ENCODE measurements at regions of chr1 and their contacts with region 1.

Region 1: GRCh38 chr1:45303582-45304310 is 22.9 kb upstream of the HPDL start:
- DNase-seq: peak; percentile 97
- H3K4me3 Mint-ChIP-seq: peak overlapping the region; percentile 96
- H3K27ac Mint-ChIP-seq: peak overlapping the region; percentile 97
- H3K4me1 Mint-ChIP-seq: peaks cover 39% of the 10 kb centered on the region
- H3K27me3 Mint-ChIP-seq: no peaks in the 10 kb centered on the region

Region 2: GRCh38 chr1:44730741-44731512 is 572.8 kb before region 1 on chr1 and contains the start of gene RNU5D-1:
- intact Hi-C with region 1: loop called (anchors 1 kb)
- DNase-seq: peak; percentile 97
- H3K4me3 Mint-ChIP-seq: peak within 1 kb of the TSS; percentile 65
- H3K27ac Mint-ChIP-seq: peak within 1 kb of the TSS; percentile 98
- H3K4me1 Mint-ChIP-seq: peaks cover 32% of the 10 kb centered on the region
- H3K27me3 Mint-ChIP-seq: no peaks in the 10 kb centered on the region
- total RNA-seq, gene RNU5D-1: not detected in 2 replicates

Region 3: GRCh38 chr1:44985747-44986359 is 317.9 kb before region 1 on chr1:
- intact Hi-C with region 1: loop called (anchors 1 kb)
- DNase-seq: no peak
- H3K4me3 Mint-ChIP-seq: peak overlapping the region; percentile 96
- H3K27ac Mint-ChIP-seq: peak overlapping the region; percentile 89
- H3K4me1 Mint-ChIP-seq: peaks cover 17% of the 10 kb centered on the region
- H3K27me3 Mint-ChIP-seq: no peaks in the 10 kb centered on the region

Region 4: GRCh38 chr1:45079533-45079932 is 224.2 kb before region 1 on chr1:
- intact Hi-C with region 1: no loop called
- DNase-seq: no peak
- H3K4me3 Mint-ChIP-seq: no peak overlapping the region
- H3K27ac Mint-ChIP-seq: no peak overlapping the region
- H3K4me1 Mint-ChIP-seq: no peaks in the 10 kb centered on the region
- H3K27me3 Mint-ChIP-seq: peaks cover 19% of the 10 kb centered on the region

Region 5: DNA sequence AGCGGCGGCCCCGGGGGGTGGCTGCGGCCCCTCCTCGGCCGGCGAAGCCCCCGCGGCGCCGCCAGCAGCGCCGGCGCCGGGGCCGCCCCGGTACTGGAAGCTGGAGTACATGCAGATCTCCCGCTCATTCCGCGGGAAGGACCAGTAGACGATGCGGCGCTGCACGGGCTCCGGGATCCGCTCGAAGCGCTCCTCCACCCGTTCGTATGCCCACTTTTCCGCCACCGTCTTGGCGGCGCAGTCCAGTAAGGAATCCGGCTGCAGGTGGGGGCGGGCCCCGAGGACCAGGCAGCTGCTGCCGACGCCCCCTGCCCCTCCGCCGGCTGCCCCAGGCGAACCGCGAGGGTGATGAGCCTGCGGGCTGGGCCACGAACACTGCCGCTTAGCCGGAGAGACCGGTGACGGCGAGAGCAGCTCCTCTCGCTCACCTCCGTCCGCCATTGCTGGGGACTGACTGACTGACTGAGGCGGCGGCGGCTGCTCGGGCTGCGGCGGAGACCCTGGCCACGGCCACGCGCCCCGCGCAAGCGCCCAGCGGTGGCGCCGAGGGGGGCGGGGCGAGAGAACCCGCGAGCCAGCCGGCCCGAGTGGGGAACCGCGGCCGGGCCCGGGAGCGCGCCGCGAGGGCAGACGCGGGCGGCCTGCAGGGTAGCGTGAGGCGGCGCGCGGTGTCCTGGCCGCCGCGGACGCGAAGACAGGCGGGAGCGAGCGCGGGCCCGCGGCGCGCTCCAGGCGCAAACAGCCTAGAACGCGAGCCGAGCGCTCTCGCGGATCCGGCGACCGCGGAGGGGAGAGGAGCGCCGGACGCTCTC is 97.6 kb before region 1 on chr1 and contains the start of gene ZSWIM5:
- intact Hi-C with region 1: loop called (anchors 1 kb)
- DNase-seq: peak; percentile 87
- H3K4me3 Mint-ChIP-seq: peak within 1 kb of the TSS; percentile 90
- H3K27ac Mint-ChIP-seq: peak within 1 kb of the TSS; percentile 57
- H3K4me1 Mint-ChIP-seq: peaks cover 12% of the 10 kb centered on the region
- H3K27me3 Mint-ChIP-seq: peaks cover 51% of the 10 kb centered on the region
- total RNA-seq, gene ZSWIM5: 0.12 and 0.14 TPM in 2 replicates

Region 6: DNA sequence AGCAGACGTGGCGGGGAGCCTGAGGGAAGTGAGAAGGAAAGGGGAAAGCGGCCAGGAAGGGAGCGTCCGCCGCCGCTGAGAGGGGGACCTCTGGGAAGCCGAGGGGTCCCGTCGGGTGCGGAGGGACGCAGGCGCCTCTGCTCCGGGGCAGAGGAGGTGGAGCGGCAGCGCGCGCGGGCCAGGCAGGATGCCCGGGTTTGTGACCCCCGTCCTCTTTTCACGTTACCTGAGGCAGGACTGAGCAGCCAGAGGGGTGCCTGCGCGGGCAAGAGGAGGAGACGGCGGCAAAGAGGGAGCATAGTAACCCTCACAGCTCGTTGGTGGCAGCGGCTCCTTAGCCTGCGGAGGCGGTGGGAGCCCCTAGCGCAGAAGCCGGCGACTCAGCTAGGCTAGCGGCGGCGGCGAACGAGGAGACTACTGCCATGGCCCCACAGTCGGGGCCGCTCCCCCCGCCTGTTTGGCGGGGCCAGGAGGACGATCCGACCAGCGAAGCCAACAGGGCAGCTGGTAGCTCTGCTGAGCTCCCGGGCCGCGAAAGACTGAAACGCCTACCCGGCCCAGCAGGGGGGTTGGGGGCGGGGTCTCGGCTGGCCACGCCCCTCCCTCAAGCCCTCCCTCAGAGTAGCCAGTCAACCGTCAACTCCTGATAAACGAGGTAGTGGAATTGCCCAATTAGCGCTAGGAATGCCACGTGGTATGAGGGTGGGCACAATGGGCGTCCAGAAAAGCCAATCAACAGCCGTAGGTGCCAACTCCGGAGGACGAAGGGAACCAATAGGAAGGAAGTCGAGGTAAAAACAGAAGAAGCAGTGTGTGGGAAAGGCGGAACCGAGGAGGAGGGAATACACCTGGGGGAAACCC is 187.1 kb after region 1 on chr1 and contains the start of gene TESK2:
- intact Hi-C with region 1: loop called (anchors 1 kb)
- DNase-seq: peak; percentile 99
- H3K4me3 Mint-ChIP-seq: no peak within 1 kb of the TSS
- H3K27ac Mint-ChIP-seq: no peak within 1 kb of the TSS
- H3K4me1 Mint-ChIP-seq: peaks cover 13% of the 10 kb centered on the region
- H3K27me3 Mint-ChIP-seq: peaks cover 11% of the 10 kb centered on the region
- total RNA-seq, gene TESK2: 1.7 and 2.6 TPM in 2 replicates

Region 7: DNA sequence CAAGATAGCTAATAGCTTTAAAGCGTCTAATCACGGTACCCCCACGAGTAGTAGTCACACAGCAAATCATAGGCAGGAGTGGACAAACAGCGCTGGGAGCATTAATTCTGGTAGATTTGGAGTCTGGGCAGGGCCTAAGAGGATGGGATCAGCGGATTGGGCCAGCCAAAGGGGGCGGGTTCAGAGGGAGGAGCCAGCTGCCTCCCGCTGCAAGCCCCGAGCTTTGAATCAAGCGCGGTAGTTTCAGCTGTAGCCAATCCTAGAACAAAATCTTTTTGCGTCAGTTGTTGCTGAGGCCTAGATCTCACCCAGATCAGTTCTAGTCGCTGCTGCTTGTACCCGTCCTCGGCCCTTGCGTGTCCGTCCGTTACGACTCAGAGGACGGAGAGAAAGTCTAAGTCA is 279.5 kb after region 1 on chr1:
- intact Hi-C with region 1: loop called (anchors 5 kb)
- DNase-seq: peak; percentile 98
- H3K4me3 Mint-ChIP-seq: peak overlapping the region; percentile 99
- H3K27ac Mint-ChIP-seq: peak overlapping the region; percentile 98
- H3K4me1 Mint-ChIP-seq: peaks cover 22% of the 10 kb centered on the region
- H3K27me3 Mint-ChIP-seq: no peaks in the 10 kb centered on the region

Measured in activated CD4-positive, alpha-beta T cell treated with anti-CD3 and anti-CD28 coated beads, Interleukin-2, amount 10 ng/mL, durations not matched to agents 24 days and 14 days (primary cell).